Panc1 (cell line): ENCODE measurements at regions of chr21 and their contacts with region 1.

Region 1: GRCh38 chr21:33947451-33948095 is 32.0 kb upstream of the ATP5PO start:
- DNase-seq: peak; percentile 73
- ATAC-seq: peak; percentile 97
- H3K4me3 ChIP-seq: peak overlapping the region; percentile 21 to 52
- H3K27ac ChIP-seq: peak overlapping the region; percentile 96
- H3K4me1 ChIP-seq: peaks cover 20% of the 10 kb centered on the region
- H3K27me3 ChIP-seq: no peaks in the 10 kb centered on the region
- CTCF ChIP-seq: no peak

Region 2: DNA sequence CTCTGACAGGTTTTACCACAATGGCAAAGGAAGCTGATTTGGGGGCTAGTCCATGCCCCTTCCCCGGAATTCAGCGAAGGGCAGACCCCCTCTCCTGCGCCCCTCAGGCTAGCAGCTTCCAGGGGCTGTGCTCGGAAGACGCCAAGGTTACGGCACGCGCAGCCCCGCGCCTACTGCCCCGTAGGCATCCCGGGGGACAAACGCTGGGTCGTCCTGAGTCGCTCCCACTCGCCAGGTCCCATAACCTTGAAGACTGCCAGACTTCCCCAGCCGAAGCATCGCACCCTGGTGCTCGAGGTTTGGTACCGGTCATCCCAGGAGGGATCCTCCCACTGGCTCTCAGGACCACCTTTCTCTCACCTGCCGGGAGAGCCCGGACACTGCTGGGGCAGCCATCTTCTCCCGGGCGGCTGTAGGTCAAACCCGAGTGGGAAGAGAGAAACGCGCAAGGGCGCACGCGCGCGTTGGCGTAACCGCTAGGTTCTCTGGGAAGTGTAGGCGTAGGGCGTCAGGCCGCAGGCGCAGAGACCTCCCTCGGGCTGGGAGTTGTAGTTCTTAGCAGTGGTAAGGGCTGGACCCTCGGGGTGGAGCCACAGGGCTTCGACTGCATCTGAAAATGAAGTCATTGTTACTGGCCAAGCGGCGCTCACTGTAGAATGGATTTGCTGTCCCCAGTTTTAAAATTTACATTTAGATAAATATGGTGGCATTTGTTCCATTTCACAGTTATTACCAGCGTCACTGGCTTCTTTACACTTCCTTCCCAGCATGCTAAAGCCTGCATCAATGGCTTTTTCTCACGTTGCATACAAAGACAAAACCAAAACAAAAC is 32.0 kb before region 1 on chr21 and contains the start of gene ATP5PO:
- CTCF ChIA-PET with region 1: interaction called, 10 read pairs
- POLR2A ChIA-PET with region 1: no interaction called
- in situ Hi-C with region 1: no loop called
- intact Hi-C with region 1: no loop called
- DNase-seq: peak; percentile 90
- ATAC-seq: peak; percentile 100
- H3K4me3 ChIP-seq: peak within 1 kb of the TSS; percentile 91 to 99
- H3K27ac ChIP-seq: peak within 1 kb of the TSS; percentile 94
- H3K4me1 ChIP-seq: peaks cover 4% of the 10 kb centered on the region; the same call in 1 of the 2 replicates
- H3K27me3 ChIP-seq: no peaks in the 10 kb centered on the region
- CTCF ChIP-seq: no peak
- total RNA-seq, gene ATP5PO: 190 TPM

Region 3: DNA sequence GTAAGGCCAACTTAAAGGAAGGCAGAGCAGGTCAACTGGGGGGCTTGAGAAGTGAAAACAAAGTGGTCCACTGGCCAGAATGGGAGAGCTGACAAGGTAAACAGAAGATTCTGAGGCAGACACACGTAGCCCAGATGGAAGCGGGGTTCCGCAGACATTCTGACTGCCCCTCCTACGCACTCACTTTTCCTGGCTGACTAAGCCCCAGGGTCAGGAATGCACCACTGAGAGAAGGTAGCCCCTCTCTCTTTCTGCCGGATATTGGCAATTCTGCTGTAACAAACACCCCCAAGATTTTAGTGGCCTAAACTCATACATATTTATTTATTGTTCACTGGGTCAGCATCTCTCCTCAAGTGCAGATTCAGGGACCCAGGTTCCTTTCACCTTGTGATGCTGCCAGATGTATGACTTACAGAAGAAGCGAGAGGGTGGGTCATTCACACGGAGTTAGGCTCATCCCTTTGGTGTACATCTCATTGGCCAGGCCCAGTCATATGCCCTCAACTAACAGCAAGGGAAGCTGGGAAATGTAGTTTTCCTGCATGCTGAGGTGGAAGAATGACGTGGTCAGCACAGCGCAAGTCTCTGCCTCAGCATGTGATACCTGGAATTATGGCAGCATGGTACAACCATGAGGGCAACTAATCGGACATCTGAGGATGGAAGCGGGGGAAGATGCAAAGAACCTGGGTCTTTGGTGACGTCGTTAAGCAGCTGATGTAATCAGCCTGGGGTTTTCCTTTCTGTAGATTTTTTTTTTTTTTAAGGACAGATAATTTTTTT is 82.4 kb after region 1 on chr21:
- CTCF ChIA-PET with region 1: no interaction called
- POLR2A ChIA-PET with region 1: no interaction called
- in situ Hi-C with region 1: no loop called
- intact Hi-C with region 1: no loop called
- DNase-seq: peak; percentile 39
- ATAC-seq: peak; percentile 90
- H3K4me3 ChIP-seq: peak overlapping the region in 1 of 2 experiments; percentile 16; a peak in 1 of 4 replicates
- H3K27ac ChIP-seq: no peak overlapping the region
- H3K4me1 ChIP-seq: no peaks in the 10 kb centered on the region; the same call in 1 of the 2 replicates
- H3K27me3 ChIP-seq: no peaks in the 10 kb centered on the region
- CTCF ChIP-seq: no peak

Region 4: DNA sequence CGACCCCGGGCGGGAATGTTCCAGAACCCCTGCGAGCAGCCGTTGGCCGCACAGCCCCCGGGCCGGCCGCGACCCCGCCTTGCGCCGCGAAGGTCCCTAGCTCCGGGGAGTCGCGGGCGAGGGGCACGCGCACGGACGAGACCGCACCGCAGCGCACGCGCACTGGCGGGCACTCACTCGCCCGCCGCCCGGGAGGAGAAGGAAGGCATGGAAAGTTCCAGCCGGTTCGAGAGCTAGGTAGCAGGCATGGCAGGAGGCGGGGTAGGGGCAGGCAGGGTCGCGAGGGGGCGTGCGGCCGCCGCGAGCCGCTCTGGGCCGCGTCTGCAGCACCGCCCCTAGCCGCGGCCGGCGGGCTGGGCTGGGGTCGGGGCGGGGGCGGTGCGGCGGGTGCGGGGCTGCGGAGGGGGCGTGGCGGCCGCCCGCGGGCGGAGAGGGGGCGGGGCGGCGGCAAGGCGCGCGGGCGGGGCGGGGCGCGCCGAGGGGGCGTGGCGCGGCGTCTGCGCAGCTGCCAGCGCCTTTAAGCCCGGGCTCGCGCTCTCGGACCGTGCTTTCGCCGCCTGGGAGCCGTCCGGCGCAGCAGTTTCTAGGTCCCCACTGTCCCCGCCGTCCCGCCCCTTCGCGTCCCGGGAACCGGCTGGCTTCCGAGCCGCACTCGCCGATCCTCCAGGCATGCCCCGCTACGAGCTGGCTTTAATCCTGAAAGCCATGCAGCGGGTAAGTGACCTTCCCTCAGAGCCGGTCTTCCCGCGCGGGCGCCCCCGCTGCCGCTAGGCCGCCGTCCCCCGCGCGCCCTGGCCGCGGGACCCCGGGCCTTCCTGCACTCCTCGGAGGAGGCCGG is 125.7 kb after region 1 on chr21 and contains the starts of genes MRPS6 and SLC5A3:
- CTCF ChIA-PET with region 1: no interaction called
- POLR2A ChIA-PET with region 1: interaction called, 4 read pairs
- in situ Hi-C with region 1: no loop called
- intact Hi-C with region 1: loop called (anchors 10 kb)
- DNase-seq: no peak
- ATAC-seq: peak; percentile 94
- H3K4me3 ChIP-seq: peak within 1 kb of the TSS; percentile 82 to 91
- H3K27ac ChIP-seq: peak within 1 kb of the TSS; percentile 88
- H3K4me1 ChIP-seq: peaks cover 25% of the 10 kb centered on the region
- H3K27me3 ChIP-seq: no peaks in the 10 kb centered on the region
- CTCF ChIP-seq: 0 out of 2 replicates have a peak, but pooled peaks have one; percentile 7
- total RNA-seq, gene MRPS6: 109 TPM
- total RNA-seq, gene SLC5A3: 29.4 TPM